CD4-positive, alpha-beta T cell (primary cell): ENCODE measurements at regions of chr20 and their contacts with region 1.

Region 1: DNA sequence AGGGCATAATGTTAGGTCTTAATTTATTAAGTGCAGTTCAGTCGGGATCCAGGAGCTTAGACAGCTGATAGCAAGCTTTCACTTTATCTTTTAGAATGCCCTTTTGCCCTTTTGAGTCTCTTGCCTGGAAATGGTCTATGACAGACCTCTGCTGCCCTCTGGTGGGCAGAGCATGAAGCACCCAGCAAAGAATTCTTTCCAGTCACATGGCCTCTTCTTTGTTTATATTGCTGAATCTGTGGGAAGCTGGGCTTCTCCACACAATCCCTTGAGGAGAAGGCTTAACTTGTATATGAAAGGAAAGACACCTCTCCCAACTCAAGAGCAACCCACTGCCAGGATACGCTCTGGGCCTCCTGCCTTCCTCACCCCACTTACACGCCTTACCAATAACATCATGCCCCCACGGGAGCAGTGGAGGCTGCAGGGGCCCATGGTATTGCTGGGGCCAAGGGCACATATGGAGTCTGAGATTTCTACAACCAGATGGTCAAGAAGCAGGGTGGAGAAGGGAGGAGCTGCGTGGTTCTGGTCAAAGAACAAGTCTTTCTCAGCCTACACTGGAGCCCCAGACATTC is 20.4 kb downstream of the WFDC3 start:
- DNase-seq: peak; percentile 58 to 88 (median 74)
- ATAC-seq: peak; percentile 92
- H3K4me3 ChIP-seq: no peak overlapping the region
- H3K4me3 Mint-ChIP-seq: no peak overlapping the region
- H3K27ac ChIP-seq: no peak overlapping the region
- H3K27ac Mint-ChIP-seq: no peak overlapping the region
- H3K4me1 ChIP-seq: peaks cover 5% of the 10 kb centered on the region
- H3K4me1 Mint-ChIP-seq: peaks cover 5% of the 10 kb centered on the region
- H3K27me3 ChIP-seq: peaks cover 8 to 12% of the 10 kb centered on the region in 2 experiments
- H3K27me3 Mint-ChIP-seq: peaks cover 18% of the 10 kb centered on the region
- CTCF ChIP-seq: peak; percentile 91

Region 2: GRCh38 chr20:45306431-45306982 is 464.8 kb before region 1 on chr20 and contains the start of gene RBPJL:
- CTCF ChIA-PET with region 1: interaction called, 3 read pairs
- POLR2A ChIA-PET with region 1: no interaction called
- intact Hi-C with region 1: loop called in 1 of 2 experiments (anchors 1 kb)
- DNase-seq: peak in 13 of 14 experiments; percentile 11 to 65 (median 24)
- ATAC-seq: no peak
- H3K4me3 ChIP-seq: no peak within 1 kb of the TSS
- H3K4me3 Mint-ChIP-seq: no peak within 1 kb of the TSS
- H3K27ac ChIP-seq: no peak within 1 kb of the TSS
- H3K27ac Mint-ChIP-seq: no peak within 1 kb of the TSS
- H3K4me1 ChIP-seq: peaks cover 8% of the 10 kb centered on the region
- H3K4me1 Mint-ChIP-seq: peaks cover 5% of the 10 kb centered on the region
- H3K27me3 ChIP-seq: peaks cover 22 to 29% of the 10 kb centered on the region in 2 experiments
- H3K27me3 Mint-ChIP-seq: peaks cover 80% of the 10 kb centered on the region
- CTCF ChIP-seq: peak; percentile 69
- total RNA-seq, gene RBPJL: not detected

Region 3: GRCh38 chr20:45362804-45363610 is 408.3 kb before region 1 on chr20 and contains the start of gene SYS1:
- CTCF ChIA-PET with region 1: interaction called, 14 read pairs
- POLR2A ChIA-PET with region 1: no interaction called
- intact Hi-C with region 1: loop called (anchors 1 to 2 kb)
- DNase-seq: peak; percentile 97 to 100 (median 99)
- ATAC-seq: peak; percentile 86
- H3K4me3 ChIP-seq: peak within 1 kb of the TSS; percentile 96
- H3K4me3 Mint-ChIP-seq: peak within 1 kb of the TSS; percentile 91
- H3K27ac ChIP-seq: peak within 1 kb of the TSS; percentile 98 to 99
- H3K27ac Mint-ChIP-seq: peak within 1 kb of the TSS; percentile 85
- H3K4me1 ChIP-seq: peaks cover 55% of the 10 kb centered on the region
- H3K4me1 Mint-ChIP-seq: peaks cover 46% of the 10 kb centered on the region
- H3K27me3 ChIP-seq: no peaks in the 10 kb centered on the region
- H3K27me3 Mint-ChIP-seq: no peaks in the 10 kb centered on the region
- CTCF ChIP-seq: peak; percentile 92
- total RNA-seq, gene SYS1: 94.8 to 107 TPM

Region 4: GRCh38 chr20:45456632-45457031 is 314.6 kb before region 1 on chr20:
- CTCF ChIA-PET with region 1: no interaction called
- POLR2A ChIA-PET with region 1: no interaction called
- intact Hi-C with region 1: loop called (anchors 1 to 5 kb)
- DNase-seq: peak in 4 of 14 experiments; percentile 10 to 45 (median 32)
- ATAC-seq: peak; percentile 32
- H3K4me3 ChIP-seq: no peak overlapping the region
- H3K4me3 Mint-ChIP-seq: no peak overlapping the region
- H3K27ac ChIP-seq: no peak overlapping the region
- H3K27ac Mint-ChIP-seq: no peak overlapping the region
- H3K4me1 ChIP-seq: no peaks in the 10 kb centered on the region
- H3K4me1 Mint-ChIP-seq: no peaks in the 10 kb centered on the region
- H3K27me3 ChIP-seq: peaks cover 0 to 6% of the 10 kb centered on the region in 2 experiments
- H3K27me3 Mint-ChIP-seq: peaks cover 8% of the 10 kb centered on the region
- CTCF ChIP-seq: no peak